Activated CD8-positive, alpha-beta T cell treated with anti-CD3 and anti-CD28 coated beads, Interleukin-2, amount 10 ng/mL, durations not matched to agents 7 days and 5 days (primary cell): ENCODE measurements at regions of chr12 and their contacts with region 1.

Region 1: GRCh38 chr12:24991209-24992049 is 42.5 kb upstream of the BCAT1 start:
- DNase-seq: peak; percentile 35
- ATAC-seq: peak; percentile 78
- H3K4me3 Mint-ChIP-seq: no peak overlapping the region
- H3K27ac Mint-ChIP-seq: no peak overlapping the region
- H3K4me1 Mint-ChIP-seq: no peaks in the 10 kb centered on the region
- H3K27me3 Mint-ChIP-seq: peaks cover 8% of the 10 kb centered on the region

Region 2: GRCh38 chr12:25119020-25119419 is 127.6 kb after region 1 on chr12:
- CTCF ChIA-PET with region 1: interaction called, 21 read pairs
- POLR2A ChIA-PET with region 1: no interaction called
- DNase-seq: no peak
- ATAC-seq: no peak
- H3K4me3 Mint-ChIP-seq: no peak overlapping the region
- H3K27ac Mint-ChIP-seq: no peak overlapping the region
- H3K4me1 Mint-ChIP-seq: peaks cover 3% of the 10 kb centered on the region
- H3K27me3 Mint-ChIP-seq: no peaks in the 10 kb centered on the region

Region 3: GRCh38 chr12:25130741-25131188 is 139.3 kb after region 1 on chr12:
- CTCF ChIA-PET with region 1: interaction called, 60 read pairs
- POLR2A ChIA-PET with region 1: interaction called, 3 read pairs
- DNase-seq: no peak
- ATAC-seq: no peak
- H3K4me3 Mint-ChIP-seq: no peak overlapping the region
- H3K27ac Mint-ChIP-seq: no peak overlapping the region
- H3K4me1 Mint-ChIP-seq: no peaks in the 10 kb centered on the region
- H3K27me3 Mint-ChIP-seq: no peaks in the 10 kb centered on the region